ENCODE measurements at regions of chr4 and their contacts with region 1.

Region 1: GRCh38 chr4:8917868-8918783 is 46.5 kb upstream of the HMX1 start:
- DNase-seq: peak; percentile 86
- H3K4me3 ChIP-seq: no peak overlapping the region
- H3K27ac ChIP-seq: no peak overlapping the region
- H3K4me1 ChIP-seq: peaks cover 0 to 5% (median 0%) of the 10 kb centered on the region in 6 donors
- H3K27me3 ChIP-seq: peaks cover 0 to 57% (median 0%) of the 10 kb centered on the region in 7 donors
- CTCF ChIP-seq: peak; percentile 44 to 95 (median 80)
- POLR2A ChIP-seq: no peak

Region 2: GRCh38 chr4:8607603-8608481 is 310.3 kb before region 1 on chr4:
- intact Hi-C with region 1: loop called (anchors 10 kb)
- DNase-seq: peak; percentile 84
- H3K4me3 ChIP-seq: no peak overlapping the region
- H3K27ac ChIP-seq: no peak overlapping the region
- H3K4me1 ChIP-seq: peaks cover 0 to 6% (median 4%) of the 10 kb centered on the region in 6 donors
- H3K27me3 ChIP-seq: peaks cover 0 to 47% (median 0%) of the 10 kb centered on the region in 7 donors
- CTCF ChIP-seq: peak; percentile 35 to 93 (median 80)
- POLR2A ChIP-seq: no peak

Region 3: DNA sequence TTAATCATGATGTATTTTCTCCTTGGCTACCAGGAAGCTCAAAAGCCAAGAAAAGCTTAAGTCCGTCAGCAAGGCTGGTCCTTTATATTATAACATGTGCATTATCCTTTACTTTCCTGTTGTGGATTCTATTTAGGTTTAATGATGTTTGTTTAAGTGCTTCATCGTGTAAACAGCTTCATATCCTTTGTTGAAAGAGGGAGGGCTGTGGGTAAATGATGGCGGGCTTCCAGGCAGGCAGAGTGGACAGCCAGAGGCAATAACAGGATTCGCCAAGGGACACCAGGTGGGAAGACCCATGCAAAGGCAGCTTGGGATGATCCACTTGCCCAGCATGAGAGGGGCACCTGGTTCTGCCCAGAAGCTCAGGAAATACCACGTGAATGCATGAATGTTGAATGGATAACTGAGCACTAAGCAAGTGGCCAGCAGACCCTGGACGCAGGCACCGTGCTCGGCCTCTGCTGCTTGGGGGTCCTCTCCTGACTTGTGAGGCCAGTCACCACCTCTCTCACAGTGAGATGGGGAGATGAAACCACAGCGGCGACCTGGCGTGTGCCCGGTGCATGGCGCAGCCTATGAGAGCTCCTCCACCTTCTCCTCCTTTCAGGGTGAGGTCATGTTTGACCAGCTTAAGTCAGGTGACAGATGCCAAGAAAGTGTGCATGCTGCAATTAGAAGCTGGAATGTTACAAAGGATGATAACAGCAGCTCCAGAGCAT is 122.2 kb before region 1 on chr4:
- intact Hi-C with region 1: no loop called
- DNase-seq: no peak
- H3K4me3 ChIP-seq: no peak overlapping the region
- H3K27ac ChIP-seq: no peak overlapping the region
- H3K4me1 ChIP-seq: no peaks in the 10 kb centered on the region
- H3K27me3 ChIP-seq: no peaks in the 10 kb centered on the region
- CTCF ChIP-seq: no peak
- POLR2A ChIP-seq: no peak

Measured in spleen (tissue), 13 donors.